ENCODE measurements at regions of chr12 and their contacts with region 1.

Region 1: GRCh38 chr12:110088936-110089335 is 35.2 kb upstream of the IFT81 start:
- DNase-seq: no peak
- ATAC-seq: peak; percentile 3 to 58

Region 2: DNA sequence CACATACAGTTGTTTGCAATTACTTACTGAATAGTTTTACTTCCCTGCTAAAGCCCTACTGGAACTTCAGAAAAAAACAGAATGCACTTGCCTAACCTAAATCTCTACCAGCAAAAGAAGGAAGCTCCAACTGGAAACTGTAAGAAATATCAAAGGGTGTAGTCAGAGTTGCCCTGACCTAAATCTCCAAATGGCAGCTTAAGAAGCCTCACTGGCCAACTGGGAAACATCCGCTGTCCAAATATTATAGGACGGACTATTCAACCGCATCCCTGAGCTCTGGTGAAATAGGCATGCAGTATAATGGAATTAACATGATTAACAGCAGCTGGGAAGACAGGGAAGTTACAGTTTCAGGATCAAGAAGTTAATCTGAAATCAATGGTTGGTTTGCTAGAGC is 290.3 kb after region 1 on chr12:
- intact Hi-C with region 1: loop called in 1 of 2 experiments (anchors 5 kb)
- DNase-seq: no peak
- ATAC-seq: no peak

Region 3: GRCh38 chr12:110424237-110424636 is 335.3 kb after region 1 on chr12:
- intact Hi-C with region 1: loop called in 1 of 2 experiments (anchors 10 kb)
- DNase-seq: no peak
- ATAC-seq: no peak